GM10248 (cell line): ENCODE measurements at regions of chr13 and their contacts with region 1.

Region 1: GRCh38 chr13:41013835-41014234 is 5.3 kb downstream of the ELF1 start:
- DNase-seq: no peak
- CTCF ChIP-seq: no peak

Region 2: DNA sequence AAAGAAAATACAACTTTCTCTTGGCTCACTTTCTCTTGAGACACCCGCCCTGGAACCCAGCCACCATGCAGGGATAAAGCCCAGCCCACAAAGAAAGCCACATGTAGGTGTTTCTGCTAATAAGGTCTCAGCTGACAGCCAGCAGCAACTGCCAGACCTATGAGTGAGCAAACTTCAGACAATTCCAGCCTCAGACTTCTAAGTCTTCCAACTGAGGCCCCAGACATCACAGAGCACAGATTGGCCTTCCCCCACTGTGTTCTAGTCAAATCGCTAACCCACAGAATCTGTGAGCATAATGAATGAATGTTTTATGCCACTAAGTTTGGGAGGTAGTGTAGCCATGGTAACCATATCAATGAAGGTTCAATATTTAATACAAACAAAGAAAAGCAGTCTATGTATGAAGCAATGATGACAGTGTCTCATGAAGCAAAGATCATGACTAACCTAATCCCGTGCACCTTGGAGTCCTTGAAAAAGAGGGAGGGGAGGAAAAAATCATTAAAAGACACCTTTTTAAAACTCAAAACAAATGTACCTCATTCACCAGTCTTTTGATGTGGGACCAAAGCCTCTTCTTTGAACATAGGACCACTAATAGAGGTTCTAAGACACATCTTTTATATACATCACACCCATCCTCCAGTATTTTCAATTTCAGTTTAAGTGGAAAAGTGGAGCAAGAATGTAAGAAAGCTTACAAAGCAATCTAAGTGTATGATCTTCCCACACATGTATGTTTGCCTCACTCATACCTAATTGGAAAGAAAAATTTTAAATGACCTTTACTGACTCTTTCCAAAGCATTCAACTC is 249.0 kb before region 1 on chr13:
- CTCF ChIA-PET with region 1: no interaction called
- POLR2A ChIA-PET with region 1: no interaction called
- DNase-seq: no peak
- CTCF ChIP-seq: no peak

Region 3: DNA sequence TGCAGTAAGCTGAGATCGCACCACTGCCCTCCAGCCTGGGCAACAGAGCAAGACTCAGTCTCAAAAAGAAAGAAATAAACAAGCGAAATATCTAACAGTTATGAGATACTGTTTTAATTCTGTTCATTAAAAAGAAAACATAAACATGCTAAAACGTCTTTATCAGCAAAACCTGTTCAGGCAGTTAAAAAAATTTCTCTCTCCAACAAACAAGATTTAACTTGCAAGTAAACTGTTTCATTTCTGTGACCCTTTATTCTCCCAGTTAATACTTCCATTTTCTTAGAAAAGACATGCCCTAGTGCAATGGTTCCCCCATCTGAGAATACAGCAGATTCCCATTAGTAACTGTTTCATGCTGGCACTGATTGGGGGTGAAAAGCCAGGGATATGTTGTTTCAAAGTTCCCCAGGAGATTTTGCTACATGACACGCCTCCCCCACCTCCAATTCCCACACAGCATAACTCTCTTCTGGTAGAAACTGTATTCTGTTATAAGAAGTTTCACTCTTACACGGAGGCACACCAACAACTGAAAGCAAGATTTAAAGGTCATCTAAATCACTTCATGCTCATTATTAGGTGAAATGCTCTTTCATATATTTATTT is 19.1 kb before region 1 on chr13:
- CTCF ChIA-PET with region 1: interaction called, 5 read pairs
- POLR2A ChIA-PET with region 1: interaction called, 11 read pairs
- DNase-seq: peak; percentile 46
- CTCF ChIP-seq: no peak